WTC11 (cell line): ENCODE measurements at regions of chr1 and their contacts with region 1.

Region 1: DNA sequence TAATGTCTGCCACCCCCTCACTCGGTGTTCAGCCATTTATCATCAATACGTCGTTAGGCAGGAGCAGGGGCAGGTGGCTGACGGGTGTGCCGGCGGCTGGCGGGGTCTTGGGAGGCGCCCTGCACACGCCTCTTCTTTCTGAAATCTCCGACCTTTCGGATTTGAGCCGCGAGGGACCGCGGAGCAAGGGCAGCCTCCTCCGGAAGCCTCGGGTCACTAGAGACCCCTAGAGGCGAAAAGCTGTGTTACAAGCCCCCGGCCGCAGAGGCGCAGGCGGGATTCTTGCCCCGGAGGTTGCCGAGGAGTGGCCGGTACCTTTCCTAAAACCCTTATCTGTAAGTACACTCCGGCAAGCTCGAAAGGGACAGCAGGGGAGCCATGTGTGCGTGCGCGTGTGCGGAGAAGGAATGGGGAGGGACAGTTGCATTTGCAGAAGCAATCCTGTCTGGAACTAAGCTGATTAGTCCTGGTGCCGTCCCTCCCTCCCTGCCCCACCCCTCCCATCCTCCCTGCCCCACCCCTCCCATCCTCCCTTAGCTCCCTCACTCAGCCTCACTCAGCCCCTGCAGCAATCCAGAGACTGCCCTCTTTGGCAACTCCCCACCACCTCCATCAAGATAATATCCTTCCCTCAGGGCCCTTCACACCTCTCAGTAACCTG is 11.0 kb downstream of the BRINP2 start:
- DNase-seq: peak; percentile 92
- ATAC-seq: peak; percentile 92
- H3K4me3 Mint-ChIP-seq: peak overlapping the region; percentile 74
- H3K27ac Mint-ChIP-seq: no peak overlapping the region
- H3K4me1 Mint-ChIP-seq: peaks cover 12% of the 10 kb centered on the region
- H3K27me3 Mint-ChIP-seq: peaks cover 48% of the 10 kb centered on the region
- CTCF ChIP-seq: peak; percentile 89

Region 2: DNA sequence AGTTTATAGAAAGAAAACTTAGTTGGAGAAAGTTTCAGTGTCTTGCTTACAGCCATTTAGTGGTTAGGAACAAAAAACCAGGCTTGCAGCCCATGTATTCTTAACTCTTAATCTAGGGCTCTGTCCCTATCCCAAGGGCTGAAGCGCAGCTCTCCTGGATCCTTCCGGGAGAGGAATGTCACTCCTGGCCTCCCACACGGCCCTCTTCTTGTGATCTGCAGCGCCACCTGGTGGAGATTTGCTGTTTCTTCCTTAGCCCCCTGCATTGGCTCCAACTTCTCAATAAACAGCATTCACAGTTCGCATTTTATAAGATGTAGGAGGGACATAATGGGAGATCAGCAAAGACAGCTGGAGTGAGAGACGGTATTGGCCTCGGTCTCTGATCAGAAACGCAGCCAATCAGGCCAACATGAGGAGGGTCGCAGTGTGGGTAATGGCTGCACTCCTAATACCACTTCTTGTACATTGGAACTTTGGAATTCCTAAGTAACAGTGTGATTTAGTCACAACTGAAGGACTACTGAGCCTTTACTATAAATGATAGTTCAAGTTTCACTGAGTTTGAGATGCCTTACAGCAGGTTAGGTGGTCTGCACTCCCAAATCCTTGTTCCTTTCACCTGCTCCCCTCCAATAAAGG is 300.7 kb before region 1 on chr1:
- CTCF ChIA-PET with region 1: interaction called, 13 read pairs
- POLR2A ChIA-PET with region 1: no interaction called
- DNase-seq: peak; percentile 84
- ATAC-seq: peak; percentile 86
- H3K4me3 Mint-ChIP-seq: no peak overlapping the region
- H3K27ac Mint-ChIP-seq: no peak overlapping the region
- H3K4me1 Mint-ChIP-seq: no peaks in the 10 kb centered on the region; the same call in 1 of the 2 replicates
- H3K27me3 Mint-ChIP-seq: no peaks in the 10 kb centered on the region; the same call in 1 of the 2 replicates
- CTCF ChIP-seq: peak; percentile 86

Region 3: DNA sequence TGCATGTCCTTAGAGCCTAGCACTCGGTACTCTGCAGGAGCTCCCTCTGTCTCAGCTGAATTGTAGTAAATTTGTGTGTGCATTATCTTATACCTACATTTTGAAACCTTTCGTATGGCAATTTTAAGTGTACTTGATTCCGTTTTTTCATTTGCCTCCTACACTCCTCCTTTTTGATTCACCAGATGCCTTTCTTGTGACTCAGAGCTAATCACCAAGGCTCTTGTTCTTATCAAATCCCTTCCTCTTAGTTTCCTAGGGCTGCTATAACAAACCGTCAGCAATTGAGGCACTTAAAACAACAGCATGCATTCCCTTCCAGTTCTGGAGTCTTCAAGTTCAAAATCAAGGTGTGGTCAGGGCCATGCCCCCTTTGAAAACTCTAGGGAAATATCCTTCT is 278.3 kb before region 1 on chr1:
- CTCF ChIA-PET with region 1: interaction called, 57 read pairs
- POLR2A ChIA-PET with region 1: no interaction called
- DNase-seq: no peak
- ATAC-seq: no peak
- H3K4me3 Mint-ChIP-seq: no peak overlapping the region
- H3K27ac Mint-ChIP-seq: no peak overlapping the region
- H3K4me1 Mint-ChIP-seq: peaks cover 15% of the 10 kb centered on the region
- H3K27me3 Mint-ChIP-seq: no peaks in the 10 kb centered on the region
- CTCF ChIP-seq: no peak

Region 4: GRCh38 chr1:177137814-177138213 is 43.9 kb before region 1 on chr1:
- CTCF ChIA-PET with region 1: interaction called, 11 read pairs
- POLR2A ChIA-PET with region 1: no interaction called
- DNase-seq: no peak
- ATAC-seq: peak; percentile 81
- H3K4me3 Mint-ChIP-seq: no peak overlapping the region
- H3K27ac Mint-ChIP-seq: no peak overlapping the region
- H3K4me1 Mint-ChIP-seq: peaks cover 11% of the 10 kb centered on the region
- H3K27me3 Mint-ChIP-seq: no peaks in the 10 kb centered on the region
- CTCF ChIP-seq: no peak

Region 5: DNA sequence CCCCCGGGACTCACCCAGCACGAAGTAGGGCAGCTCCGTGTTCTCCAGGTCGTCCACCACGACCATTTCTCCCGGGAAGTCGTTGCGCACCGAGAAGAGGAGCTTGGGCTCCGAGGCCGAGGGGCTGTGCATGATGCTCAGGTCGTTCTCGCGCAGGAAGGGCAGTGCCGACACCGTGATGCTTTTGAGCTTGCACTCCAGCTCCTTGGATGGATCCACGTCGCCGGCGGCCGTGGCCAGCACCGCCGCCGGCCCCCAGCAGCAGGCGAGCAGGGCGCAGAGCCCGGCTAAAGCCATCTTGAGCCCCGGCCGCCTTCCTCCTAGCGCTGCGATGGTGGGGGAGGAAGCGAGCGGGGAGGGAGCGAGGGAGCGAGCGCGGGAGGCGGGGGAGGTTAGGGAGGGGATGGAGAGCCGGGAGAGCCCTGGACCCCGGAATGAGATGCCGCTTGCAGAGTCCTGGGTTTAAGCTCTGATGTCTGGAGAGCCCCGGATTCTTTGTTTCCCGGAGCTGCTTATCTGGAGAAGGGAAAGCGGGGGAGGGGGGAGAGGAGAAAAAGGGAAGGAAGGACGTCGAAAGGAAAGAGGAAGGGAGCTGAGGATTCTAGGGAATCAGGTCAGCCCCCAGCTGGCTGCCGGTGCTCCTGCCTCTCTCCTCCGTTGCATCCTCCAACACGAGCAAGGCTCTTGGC is 17.2 kb before region 1 on chr1 and contains the start of gene ASTN1:
- CTCF ChIA-PET with region 1: interaction called, 35 read pairs
- POLR2A ChIA-PET with region 1: interaction called, 7 read pairs
- DNase-seq: peak; percentile 69
- ATAC-seq: peak; percentile 89
- H3K4me3 Mint-ChIP-seq: peak within 1 kb of the TSS; percentile 90
- H3K27ac Mint-ChIP-seq: no peak within 1 kb of the TSS
- H3K4me1 Mint-ChIP-seq: peaks cover 9% of the 10 kb centered on the region
- H3K27me3 Mint-ChIP-seq: peaks cover 26% of the 10 kb centered on the region; the same call in 1 of the 2 replicates
- CTCF ChIP-seq: no peak
- total RNA-seq, gene ASTN1: 3.4 to 5.0 TPM (median 4.7 TPM) in 3 replicates

Region 6: GRCh38 chr1:177170756-177171535 is 10.8 kb before region 1 on chr1 and contains the start of gene BRINP2:
- CTCF ChIA-PET with region 1: interaction called, 44 read pairs
- POLR2A ChIA-PET with region 1: interaction called, 7 read pairs
- DNase-seq: peak; percentile 87
- ATAC-seq: peak; percentile 100
- H3K4me3 Mint-ChIP-seq: no peak within 1 kb of the TSS
- H3K27ac Mint-ChIP-seq: no peak within 1 kb of the TSS
- H3K4me1 Mint-ChIP-seq: peaks cover 11% of the 10 kb centered on the region
- H3K27me3 Mint-ChIP-seq: peaks cover 6% of the 10 kb centered on the region
- CTCF ChIP-seq: no peak
- total RNA-seq, gene BRINP2: 0.24 to 0.41 TPM (median 0.34 TPM) in 3 replicates